ENCODE measurements at regions of chr3 and their contacts with region 1.

Region 1: GRCh38 chr3:184229394-184230080 is at the start of gene VWA5B2:
- DNase-seq: peak; percentile 69 to 77 (median 70)
- H3K4me3 ChIP-seq: peak within 1 kb of the TSS; percentile 23 to 51
- H3K4me3 Mint-ChIP-seq: peak within 1 kb of the TSS; percentile 53 to 76 (median 66)
- H3K27ac ChIP-seq: no peak within 1 kb of the TSS
- H3K27ac Mint-ChIP-seq: peak within 1 kb of the TSS in 1 of 7 donors; percentile 76
- H3K4me1 ChIP-seq: peaks cover 11% of the 10 kb centered on the region
- H3K4me1 Mint-ChIP-seq: peaks cover 5 to 17% (median 7%) of the 10 kb centered on the region in 4 donors
- H3K27me3 ChIP-seq: peaks cover 40% of the 10 kb centered on the region
- H3K27me3 Mint-ChIP-seq: peaks cover 44 to 46% of the 10 kb centered on the region in 2 donors
- total RNA-seq, gene VWA5B2: not detected

Region 2: GRCh38 chr3:184185461-184186308 is 43.9 kb before region 1 on chr3 and contains the start of gene ABCF3:
- CTCF ChIA-PET with region 1: interaction called, 3 read pairs
- POLR2A ChIA-PET with region 1: no interaction called
- intact Hi-C with region 1: loop called (anchors 5 kb)
- DNase-seq: peak; percentile 98 to 100 (median 99)
- H3K4me3 ChIP-seq: peak within 1 kb of the TSS; percentile 87 to 98
- H3K4me3 Mint-ChIP-seq: peak within 1 kb of the TSS; percentile 98 to 99 (median 98)
- H3K27ac ChIP-seq: peak within 1 kb of the TSS; percentile 80
- H3K27ac Mint-ChIP-seq: peak within 1 kb of the TSS; percentile 92 to 99 (median 97)
- H3K4me1 ChIP-seq: peaks cover 30% of the 10 kb centered on the region
- H3K4me1 Mint-ChIP-seq: peaks cover 26 to 47% (median 36%) of the 10 kb centered on the region in 4 donors
- H3K27me3 ChIP-seq: no peaks in the 10 kb centered on the region
- H3K27me3 Mint-ChIP-seq: no peaks in the 10 kb centered on the region
- total RNA-seq, gene ABCF3: 122 to 124 TPM

Region 3: GRCh38 chr3:184203526-184203925 is 26.0 kb before region 1 on chr3:
- CTCF ChIA-PET with region 1: interaction called, 21 read pairs
- POLR2A ChIA-PET with region 1: no interaction called
- intact Hi-C with region 1: no loop called
- DNase-seq: no peak
- H3K4me3 ChIP-seq: no peak overlapping the region
- H3K4me3 Mint-ChIP-seq: no peak overlapping the region
- H3K27ac ChIP-seq: no peak overlapping the region
- H3K27ac Mint-ChIP-seq: no peak overlapping the region
- H3K4me1 ChIP-seq: no peaks in the 10 kb centered on the region
- H3K4me1 Mint-ChIP-seq: no peaks in the 10 kb centered on the region
- H3K27me3 ChIP-seq: no peaks in the 10 kb centered on the region
- H3K27me3 Mint-ChIP-seq: peaks cover 16 to 17% of the 10 kb centered on the region in 2 donors

Region 4: DNA sequence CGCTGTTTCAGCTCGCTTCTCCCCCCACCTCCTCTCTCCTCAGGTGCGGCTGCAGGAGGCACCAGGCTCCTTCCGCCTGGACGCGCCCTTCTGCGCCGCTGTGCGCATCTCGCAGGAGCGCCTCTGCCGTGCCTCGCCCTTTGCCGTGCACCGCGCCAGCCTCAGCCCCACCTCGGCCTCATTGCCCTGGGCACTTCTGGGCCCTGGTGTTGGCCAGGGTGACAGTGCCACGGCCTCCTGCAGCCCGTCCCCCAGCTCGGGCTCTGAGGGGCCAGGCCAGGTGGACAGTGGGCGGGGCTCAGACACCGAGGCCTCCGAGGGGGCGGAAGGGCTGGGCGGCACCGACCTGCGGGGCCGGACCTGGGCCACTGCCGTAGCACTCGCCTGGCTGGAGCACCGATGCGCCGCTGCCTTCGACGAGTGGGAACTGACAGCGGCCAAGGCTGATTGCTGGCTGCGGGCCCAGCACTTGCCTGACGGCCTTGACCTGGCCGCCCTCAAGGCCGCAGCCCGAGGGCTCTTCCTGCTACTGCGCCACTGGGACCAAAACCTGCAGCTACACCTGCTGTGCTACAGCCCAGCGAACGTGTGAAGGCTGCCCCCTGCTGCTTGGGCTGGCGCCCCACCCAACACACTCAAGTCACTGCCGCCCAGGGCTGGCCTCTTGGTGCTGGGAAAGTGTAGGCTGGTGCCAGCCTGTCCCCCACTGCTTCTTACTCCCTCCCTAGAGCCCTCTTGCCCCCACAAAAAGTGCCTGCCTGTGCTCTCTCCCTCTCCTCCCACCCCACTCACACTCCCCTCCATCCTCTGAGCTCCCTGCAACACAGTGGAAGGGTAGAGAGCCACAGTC is 12.1 kb after region 1 on chr3:
- CTCF ChIA-PET with region 1: interaction called, 59 read pairs
- POLR2A ChIA-PET with region 1: interaction called, 3 read pairs
- intact Hi-C with region 1: no loop called
- DNase-seq: no peak
- H3K4me3 ChIP-seq: no peak overlapping the region
- H3K4me3 Mint-ChIP-seq: no peak overlapping the region
- H3K27ac ChIP-seq: no peak overlapping the region
- H3K27ac Mint-ChIP-seq: no peak overlapping the region
- H3K4me1 ChIP-seq: no peaks in the 10 kb centered on the region
- H3K4me1 Mint-ChIP-seq: peaks cover 0 to 6% (median 2%) of the 10 kb centered on the region in 4 donors
- H3K27me3 ChIP-seq: no peaks in the 10 kb centered on the region
- H3K27me3 Mint-ChIP-seq: peaks cover 0 to 2% of the 10 kb centered on the region in 2 donors

Region 5: DNA sequence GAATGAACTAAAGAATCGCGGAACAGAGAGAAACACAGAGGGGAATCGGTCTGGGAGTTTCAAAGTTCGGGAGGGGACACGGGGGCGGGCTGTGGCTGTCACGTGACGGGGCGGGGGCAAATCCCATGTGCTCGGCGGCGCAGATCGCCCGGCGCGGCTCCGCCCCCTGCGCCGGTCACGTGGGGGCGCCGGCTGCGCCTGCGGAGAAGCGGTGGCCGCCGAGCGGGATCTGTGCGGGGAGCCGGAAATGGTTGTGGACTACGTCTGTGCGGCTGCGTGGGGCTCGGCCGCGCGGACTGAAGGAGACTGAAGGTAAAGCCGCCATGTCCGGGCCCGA is 84.8 kb after region 1 on chr3 and contains the start of gene EIF4G1:
- CTCF ChIA-PET with region 1: no interaction called
- POLR2A ChIA-PET with region 1: no interaction called
- intact Hi-C with region 1: no loop called
- DNase-seq: peak; percentile 91 to 93 (median 93)
- H3K4me3 ChIP-seq: peak within 1 kb of the TSS; percentile 65 to 67
- H3K4me3 Mint-ChIP-seq: peak within 1 kb of the TSS; percentile 80 to 93 (median 90)
- H3K27ac ChIP-seq: peak within 1 kb of the TSS; percentile 92
- H3K27ac Mint-ChIP-seq: peak within 1 kb of the TSS; percentile 93 to 97 (median 96)
- H3K4me1 ChIP-seq: peaks cover 37% of the 10 kb centered on the region
- H3K4me1 Mint-ChIP-seq: peaks cover 25 to 42% (median 28%) of the 10 kb centered on the region in 4 donors
- H3K27me3 ChIP-seq: no peaks in the 10 kb centered on the region
- H3K27me3 Mint-ChIP-seq: no peaks in the 10 kb centered on the region
- total RNA-seq, gene EIF4G1: 236 to 246 TPM

Measured in CD4-positive, alpha-beta memory T cell (primary cell).